Activated B cell treated with CpG ODN at 0.5 μM for 24 hours (primary cell): ENCODE measurements at regions of chr3 and their contacts with region 1.

Region 1: DNA sequence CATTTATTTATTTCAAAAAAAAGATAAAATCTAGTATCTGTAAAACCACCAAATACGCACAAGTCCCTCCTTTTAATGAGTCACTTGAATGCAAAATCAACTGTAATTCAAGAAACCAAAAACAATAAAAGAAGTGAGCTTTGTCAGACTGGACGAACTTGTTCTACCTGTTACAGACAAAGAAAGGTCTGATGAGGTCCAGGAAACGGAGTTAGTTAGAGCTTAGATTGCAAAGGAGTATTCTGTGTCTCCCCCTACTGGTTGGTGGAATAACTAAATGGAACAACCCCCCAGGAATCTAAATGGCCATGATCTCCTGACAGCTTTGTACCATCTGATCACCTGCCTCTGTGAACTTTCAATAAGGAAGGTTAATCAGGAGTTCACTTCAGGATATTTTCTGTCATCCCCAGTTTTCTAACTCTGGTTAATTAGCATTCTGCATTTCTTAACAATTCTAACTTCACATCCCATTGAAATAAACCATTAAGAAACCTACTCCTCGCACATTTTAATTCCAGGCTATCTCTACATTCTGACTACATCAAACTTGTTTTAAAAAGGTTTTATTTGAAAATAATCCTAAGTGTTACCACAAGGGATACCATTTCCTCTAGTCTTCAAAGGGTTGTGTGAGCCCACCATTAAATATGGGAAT is 333.0 kb upstream of the SATB1 start:
- DNase-seq: no peak
- ATAC-seq: peak; percentile 78
- H3K4me3 Mint-ChIP-seq: no peak overlapping the region
- H3K27ac Mint-ChIP-seq: no peak overlapping the region
- H3K4me1 Mint-ChIP-seq: no peaks in the 10 kb centered on the region
- H3K27me3 Mint-ChIP-seq: no peaks in the 10 kb centered on the region
- CTCF ChIP-seq: peak; percentile 27

Region 2: GRCh38 chr3:17995769-17996168 is 762.4 kb before region 1 on chr3:
- CTCF ChIA-PET with region 1: no interaction called
- POLR2A ChIA-PET with region 1: no interaction called
- intact Hi-C with region 1: loop called (anchors 5 kb)
- DNase-seq: no peak
- ATAC-seq: no peak
- H3K4me3 Mint-ChIP-seq: no peak overlapping the region
- H3K27ac Mint-ChIP-seq: no peak overlapping the region
- H3K4me1 Mint-ChIP-seq: no peaks in the 10 kb centered on the region
- H3K27me3 Mint-ChIP-seq: no peaks in the 10 kb centered on the region
- CTCF ChIP-seq: no peak

Region 3: GRCh38 chr3:18424729-18425640 is 333.2 kb before region 1 on chr3 and contains the start of gene SATB1:
- CTCF ChIA-PET with region 1: interaction called, 4 read pairs
- POLR2A ChIA-PET with region 1: interaction called, 6 read pairs
- intact Hi-C with region 1: loop called (anchors 5 kb)
- DNase-seq: peak; percentile 68
- ATAC-seq: peak; percentile 49
- H3K4me3 Mint-ChIP-seq: peak within 1 kb of the TSS; percentile 91
- H3K27ac Mint-ChIP-seq: peak within 1 kb of the TSS; percentile 87
- H3K4me1 Mint-ChIP-seq: peaks cover 40% of the 10 kb centered on the region
- H3K27me3 Mint-ChIP-seq: no peaks in the 10 kb centered on the region
- CTCF ChIP-seq: no peak
- total RNA-seq, gene SATB1: 23.0 and 30.8 TPM in 2 replicates

Region 4: DNA sequence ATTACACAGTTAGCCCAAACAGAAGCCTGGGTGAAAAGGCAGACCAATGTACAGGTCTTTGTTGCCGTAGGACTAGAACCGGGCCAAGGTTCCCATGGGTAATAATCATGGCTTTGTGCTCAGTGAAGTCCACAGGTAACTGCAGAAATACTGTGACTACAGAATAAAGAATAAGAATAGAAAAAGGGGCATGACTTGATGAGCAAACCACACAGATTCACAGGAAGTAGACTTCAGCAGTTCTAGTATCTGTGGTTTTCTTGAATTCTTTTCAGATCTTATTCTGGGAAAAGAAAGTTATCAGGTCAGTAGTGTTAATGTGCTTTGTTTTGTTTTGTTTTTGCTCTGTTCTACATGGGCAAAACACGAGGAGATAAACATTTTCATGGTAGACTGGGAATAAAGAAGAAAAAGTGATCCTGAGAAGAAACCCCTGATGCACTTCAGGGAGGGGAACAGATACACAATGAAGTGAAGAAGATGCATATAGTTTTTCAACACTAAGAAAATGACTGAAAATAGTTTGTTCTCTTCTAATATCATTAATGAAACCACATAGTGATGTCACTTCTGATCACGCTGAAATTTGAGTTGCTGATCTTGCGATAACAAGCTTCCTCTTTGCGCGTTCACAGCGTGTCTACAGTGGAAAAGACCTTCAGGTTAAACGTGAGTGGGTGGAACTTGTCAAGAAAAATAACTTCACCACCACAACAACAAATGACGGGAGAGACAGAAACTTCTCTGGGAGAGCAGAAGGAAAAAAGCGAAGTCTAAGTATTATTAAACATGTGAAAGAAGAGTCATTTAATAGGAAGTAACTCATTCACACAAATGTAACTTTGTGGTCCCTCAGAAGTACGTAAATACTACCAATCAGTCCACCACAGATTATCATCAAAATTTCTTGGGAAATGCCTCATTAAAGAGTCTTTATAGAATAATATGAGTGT is 17.3 kb before region 1 on chr3:
- CTCF ChIA-PET with region 1: no interaction called
- POLR2A ChIA-PET with region 1: no interaction called
- intact Hi-C with region 1: loop called (anchors 1 kb)
- DNase-seq: no peak
- ATAC-seq: peak; percentile 73
- H3K4me3 Mint-ChIP-seq: peak overlapping the region; percentile 73
- H3K27ac Mint-ChIP-seq: peak overlapping the region; percentile 88
- H3K4me1 Mint-ChIP-seq: peaks cover 68% of the 10 kb centered on the region
- H3K27me3 Mint-ChIP-seq: no peaks in the 10 kb centered on the region
- CTCF ChIP-seq: no peak

Region 5: DNA sequence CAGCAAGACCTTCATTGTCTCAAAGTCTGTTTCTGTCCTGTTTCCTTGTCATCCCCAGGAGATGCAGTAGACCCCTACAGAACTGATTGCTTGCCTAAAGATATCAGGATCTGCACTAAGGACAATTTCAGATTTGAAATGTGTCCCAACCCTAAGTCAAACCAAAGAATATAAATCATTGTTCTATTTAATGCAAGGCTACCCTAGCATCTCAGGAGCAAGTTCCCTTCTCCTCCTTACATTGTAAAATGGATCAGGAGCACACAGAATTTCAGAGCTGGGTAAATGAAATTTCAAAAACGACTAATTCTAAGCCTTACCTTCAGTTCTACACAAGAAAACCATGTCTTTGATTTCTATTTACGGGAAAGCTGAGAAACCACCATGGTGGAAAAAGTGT is 29.3 kb after region 1 on chr3:
- CTCF ChIA-PET with region 1: no interaction called
- POLR2A ChIA-PET with region 1: no interaction called
- intact Hi-C with region 1: no loop called
- DNase-seq: no peak
- ATAC-seq: no peak
- H3K4me3 Mint-ChIP-seq: no peak overlapping the region
- H3K27ac Mint-ChIP-seq: no peak overlapping the region
- H3K4me1 Mint-ChIP-seq: no peaks in the 10 kb centered on the region
- H3K27me3 Mint-ChIP-seq: no peaks in the 10 kb centered on the region
- CTCF ChIP-seq: no peak